Ascending aorta (tissue), 2 donors: ENCODE measurements at regions of chr7 and their contacts with region 1.

Region 1: GRCh38 chr7:98641646-98642500 is 24.8 kb downstream of the NPTX2 start:
- DNase-seq: no peak
- H3K4me3 ChIP-seq: no peak overlapping the region
- H3K27ac ChIP-seq: no peak overlapping the region
- H3K4me1 ChIP-seq: no peaks in the 10 kb centered on the region
- H3K27me3 ChIP-seq: no peaks in the 10 kb centered on the region
- CTCF ChIP-seq: no peak

Region 2: GRCh38 chr7:98434095-98434494 is 207.8 kb before region 1 on chr7:
- intact Hi-C with region 1: no loop called
- DNase-seq: no peak
- H3K4me3 ChIP-seq: no peak overlapping the region
- H3K27ac ChIP-seq: no peak overlapping the region
- H3K4me1 ChIP-seq: no peaks in the 10 kb centered on the region
- H3K27me3 ChIP-seq: no peaks in the 10 kb centered on the region
- CTCF ChIP-seq: no peak

Region 3: GRCh38 chr7:98584830-98585229 is 57.0 kb before region 1 on chr7:
- intact Hi-C with region 1: loop called (anchors 10 kb)
- DNase-seq: no peak
- H3K4me3 ChIP-seq: no peak overlapping the region
- H3K27ac ChIP-seq: no peak overlapping the region
- H3K4me1 ChIP-seq: no peaks in the 10 kb centered on the region
- H3K27me3 ChIP-seq: no peaks in the 10 kb centered on the region
- CTCF ChIP-seq: no peak

Region 4: DNA sequence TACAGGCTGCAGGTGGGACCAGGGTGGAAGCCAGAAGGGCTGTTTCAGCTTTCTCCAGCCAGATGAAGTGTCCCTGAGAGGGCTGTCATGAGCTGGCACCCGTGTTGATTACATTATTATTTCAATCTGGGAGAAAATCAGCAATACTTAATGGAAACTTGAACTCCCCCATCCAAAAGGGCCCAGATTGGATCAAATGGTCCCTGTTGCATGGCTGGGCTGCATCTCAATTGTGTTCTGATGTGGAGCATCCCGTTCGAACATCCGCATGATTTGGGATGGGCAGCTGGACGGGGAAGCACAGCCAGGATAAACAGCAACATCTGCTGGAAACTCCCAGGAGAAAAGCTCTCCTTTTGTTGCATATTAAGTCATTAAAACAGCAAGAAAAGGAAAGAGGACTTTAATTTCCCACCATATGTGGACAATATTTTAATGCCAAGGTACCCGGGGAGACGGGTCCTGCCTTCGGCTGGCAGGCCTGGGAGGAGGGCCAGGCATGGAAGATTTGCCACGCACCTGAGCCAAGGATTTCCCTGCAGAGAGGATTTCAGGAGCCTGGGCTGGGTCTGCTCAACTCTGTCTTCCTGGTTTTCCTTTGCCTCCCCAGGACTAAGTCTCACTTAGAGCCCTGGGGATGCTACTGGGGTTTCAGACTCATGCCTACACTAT is 27.6 kb after region 1 on chr7:
- intact Hi-C with region 1: no loop called
- DNase-seq: no peak
- H3K4me3 ChIP-seq: no peak overlapping the region
- H3K27ac ChIP-seq: no peak overlapping the region
- H3K4me1 ChIP-seq: no peaks in the 10 kb centered on the region
- H3K27me3 ChIP-seq: no peaks in the 10 kb centered on the region
- CTCF ChIP-seq: no peak